ENCODE measurements at regions of chr18 and their contacts with region 1.

Region 1: DNA sequence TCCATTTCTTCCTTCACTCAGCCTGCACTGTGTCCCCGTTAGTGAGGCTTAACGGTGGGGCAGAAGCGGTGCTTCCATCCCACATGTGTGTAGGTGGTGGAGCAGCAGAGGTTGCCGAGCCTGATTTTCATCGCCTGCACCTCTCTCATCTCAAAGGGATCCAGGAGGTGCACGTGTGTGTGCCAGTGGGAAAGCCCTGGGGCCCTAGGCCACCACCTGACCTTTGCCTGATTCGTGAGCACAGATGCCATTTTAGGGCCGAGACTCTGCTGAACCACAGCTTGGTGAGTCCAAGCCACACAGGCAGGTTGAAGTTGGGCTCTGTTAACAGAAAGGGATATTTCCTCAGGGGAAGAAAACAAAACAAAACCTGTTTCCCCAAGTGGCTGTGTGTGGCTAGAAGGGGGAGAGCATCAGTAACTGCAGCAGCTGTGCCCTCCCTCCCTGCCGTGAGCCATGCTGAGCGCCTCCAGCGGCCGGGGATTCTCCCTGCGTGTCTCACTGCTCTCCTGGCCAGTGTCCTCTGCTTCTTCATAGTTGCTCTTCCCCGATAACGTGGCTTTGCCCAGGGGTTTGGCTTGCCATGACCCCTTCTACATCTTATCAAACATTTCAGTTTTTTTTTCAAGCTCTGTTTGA is 81.5 kb downstream of the MAPRE2 start:
- DNase-seq: no peak

Region 2: DNA sequence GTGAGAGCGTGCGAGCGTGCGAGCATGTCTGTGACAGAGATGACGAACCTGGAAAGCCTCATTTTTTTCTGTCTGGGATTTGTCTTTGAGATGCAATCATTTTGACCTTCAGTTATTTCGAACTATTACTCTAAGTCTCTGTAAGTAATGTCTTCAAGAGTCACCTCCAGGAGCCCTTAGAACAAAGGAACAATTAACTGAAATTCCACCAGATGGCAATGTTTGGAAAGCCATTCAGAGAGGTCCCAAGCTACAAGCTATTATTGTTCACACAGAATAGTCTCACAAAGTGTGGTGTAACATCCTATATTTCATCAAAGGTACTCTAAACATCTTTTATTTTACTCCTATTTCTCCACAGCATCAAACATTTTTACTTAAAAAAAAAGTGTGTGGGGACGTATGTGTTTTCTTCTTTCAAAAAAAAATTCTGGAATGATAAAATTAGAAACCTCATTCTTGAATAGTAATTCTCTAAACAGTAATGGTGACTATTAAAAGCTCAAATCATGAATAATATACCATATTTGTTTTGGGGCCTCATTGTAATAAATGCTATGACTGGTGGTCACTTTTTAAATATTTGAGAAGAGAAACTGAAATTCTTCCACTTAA is 116.6 kb before region 1 on chr18:
- intact Hi-C with region 1: loop called in 1 of 2 experiments (anchors 10 kb)
- DNase-seq: no peak

Region 3: GRCh38 chr18:35095983-35096676 is 26.6 kb before region 1 on chr18:
- intact Hi-C with region 1: no loop called
- DNase-seq: no peak